Activated naive CD4-positive, alpha-beta T cell treated with anti-CD3 and anti-CD28 coated beads for 36 hours (primary cell): ENCODE measurements at regions of chr20 and their contacts with region 1.

Region 1: DNA sequence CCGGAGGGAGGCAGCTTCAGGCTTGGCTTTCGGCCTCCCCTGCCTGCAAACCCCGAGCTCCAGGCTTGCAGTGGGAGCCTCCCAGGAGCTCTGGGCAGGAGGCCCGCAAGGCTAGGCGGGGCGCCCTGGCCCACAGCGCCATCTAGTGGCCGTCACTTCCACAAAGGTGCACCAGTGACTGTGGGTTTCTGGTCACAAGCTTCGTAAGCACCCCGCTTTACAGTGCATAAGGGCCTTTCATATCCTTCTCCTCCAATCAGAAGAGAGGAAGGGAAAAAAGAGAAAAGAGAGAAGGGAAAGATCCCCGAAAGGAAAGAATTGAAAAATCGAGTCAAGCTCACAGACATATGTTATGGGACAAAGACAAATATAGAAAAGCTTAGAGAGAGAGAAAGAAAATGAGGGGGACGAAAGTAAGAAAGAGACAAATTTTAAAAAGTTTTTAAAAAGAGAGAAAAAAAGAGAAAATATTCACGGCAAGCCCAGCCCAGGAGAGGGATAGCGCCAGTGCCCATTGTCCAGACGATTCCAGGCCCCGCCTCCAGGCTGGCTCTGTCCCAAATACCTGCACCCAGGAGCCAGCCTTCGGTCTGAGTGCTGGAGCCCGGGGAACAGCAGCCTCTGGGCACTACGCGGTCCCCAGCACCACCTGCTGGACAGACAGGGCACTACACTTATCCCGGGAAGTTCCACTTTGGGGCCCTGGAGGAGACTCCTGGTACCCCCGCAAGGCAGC is 207.1 kb downstream of the PREX1 start:
- DNase-seq: peak; percentile 86
- H3K4me3 Mint-ChIP-seq: peak overlapping the region; percentile 42
- H3K27ac Mint-ChIP-seq: no peak overlapping the region
- H3K4me1 Mint-ChIP-seq: peaks cover 4% of the 10 kb centered on the region
- H3K27me3 Mint-ChIP-seq: no peaks in the 10 kb centered on the region

Region 2: DNA sequence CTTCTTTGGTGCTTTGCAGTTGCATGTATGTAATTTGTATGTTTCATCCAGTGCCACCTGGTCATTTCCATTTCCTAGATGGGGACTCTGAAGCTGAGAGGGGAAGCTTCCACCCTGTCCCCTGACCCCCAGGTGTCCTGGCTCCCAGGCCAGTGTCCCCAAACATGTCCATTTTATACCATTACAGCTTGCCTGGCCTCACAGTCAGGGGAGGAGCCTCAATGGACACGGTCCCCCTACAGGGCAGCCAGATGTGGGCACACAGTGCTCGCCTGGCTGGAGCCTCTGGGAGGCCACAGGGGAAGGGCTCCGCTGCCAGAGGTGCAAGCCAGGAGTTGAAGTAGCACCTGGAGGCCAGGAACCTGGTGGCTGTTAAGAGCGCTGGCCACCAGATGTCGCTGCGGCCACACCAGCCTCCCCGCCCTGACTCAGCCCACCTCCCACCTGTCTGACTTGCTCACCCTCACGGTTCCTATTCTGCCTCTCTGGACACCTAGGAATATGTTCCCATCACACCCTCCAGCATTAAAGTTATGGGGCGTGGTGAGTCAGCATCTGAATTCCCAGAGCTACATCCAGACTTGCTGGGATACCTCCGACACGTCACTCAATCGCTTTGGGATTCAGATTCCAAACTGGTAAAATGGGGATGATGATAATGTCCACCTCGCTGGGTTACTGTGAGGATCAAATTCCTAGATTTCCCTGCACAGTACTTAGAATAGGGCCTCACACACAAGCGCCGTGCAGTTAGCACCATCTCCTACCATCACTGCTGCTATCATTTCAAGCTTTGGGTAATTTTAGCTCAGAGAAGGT is 942.8 kb before region 1 on chr20:
- CTCF ChIA-PET with region 1: interaction called, 20 read pairs
- intact Hi-C with region 1: loop called (anchors 1 kb)
- DNase-seq: peak; percentile 71
- H3K4me3 Mint-ChIP-seq: no peak overlapping the region
- H3K27ac Mint-ChIP-seq: no peak overlapping the region
- H3K4me1 Mint-ChIP-seq: no peaks in the 10 kb centered on the region
- H3K27me3 Mint-ChIP-seq: no peaks in the 10 kb centered on the region

Region 3: GRCh38 chr20:47785854-47786764 is 834.6 kb before region 1 on chr20:
- CTCF ChIA-PET with region 1: interaction called, 11 read pairs
- intact Hi-C with region 1: loop called (anchors 1 kb)
- DNase-seq: peak; percentile 41
- H3K4me3 Mint-ChIP-seq: peak overlapping the region; percentile 74
- H3K27ac Mint-ChIP-seq: no peak overlapping the region
- H3K4me1 Mint-ChIP-seq: peaks cover 18% of the 10 kb centered on the region
- H3K27me3 Mint-ChIP-seq: peaks cover 48% of the 10 kb centered on the region

Region 4: DNA sequence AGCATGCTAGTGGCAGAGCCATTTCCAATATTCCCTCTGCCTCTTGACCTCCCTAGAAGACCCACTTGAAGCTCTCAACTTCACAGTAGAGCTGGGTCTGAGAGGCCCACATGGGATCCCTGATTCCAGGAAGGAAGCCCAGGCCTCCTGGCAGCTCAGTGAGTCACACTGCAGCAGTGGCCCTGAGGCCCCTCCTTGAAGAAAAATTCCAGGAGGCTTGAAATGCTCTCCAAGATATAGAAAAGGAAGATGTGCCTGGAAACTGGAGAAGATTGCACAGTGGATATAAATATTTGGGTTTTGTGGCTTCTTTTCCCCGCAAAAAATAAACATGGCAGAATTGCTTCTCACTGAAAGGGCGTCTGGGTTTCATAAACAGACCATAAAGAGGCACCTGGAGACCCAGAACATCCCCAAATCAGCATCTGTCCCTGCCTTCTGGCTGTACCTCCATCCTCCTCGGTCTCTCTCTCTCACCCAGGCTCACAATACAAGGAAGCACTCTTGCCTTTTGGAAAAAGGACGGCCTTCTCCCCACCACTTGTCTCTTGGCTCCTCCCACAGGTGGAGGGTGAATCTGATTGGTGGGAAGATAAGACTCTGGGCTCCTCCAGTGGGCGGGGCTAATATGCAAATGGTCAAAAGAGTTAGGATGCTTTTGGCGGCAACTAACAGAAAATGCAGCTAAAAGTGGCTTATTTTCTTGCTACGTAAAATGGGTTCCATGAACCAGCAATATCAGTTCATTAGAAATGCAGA is 635.4 kb before region 1 on chr20:
- CTCF ChIA-PET with region 1: no interaction called
- intact Hi-C with region 1: no loop called
- DNase-seq: no peak
- H3K4me3 Mint-ChIP-seq: no peak overlapping the region
- H3K27ac Mint-ChIP-seq: no peak overlapping the region
- H3K4me1 Mint-ChIP-seq: no peaks in the 10 kb centered on the region
- H3K27me3 Mint-ChIP-seq: no peaks in the 10 kb centered on the region

Region 5: GRCh38 chr20:48489656-48490055 is 131.0 kb before region 1 on chr20:
- CTCF ChIA-PET with region 1: interaction called, 5 read pairs
- intact Hi-C with region 1: loop called (anchors 5 kb)
- DNase-seq: no peak
- H3K4me3 Mint-ChIP-seq: no peak overlapping the region
- H3K27ac Mint-ChIP-seq: no peak overlapping the region
- H3K4me1 Mint-ChIP-seq: no peaks in the 10 kb centered on the region
- H3K27me3 Mint-ChIP-seq: peaks cover 3% of the 10 kb centered on the region